ENCODE measurements at regions of chr5 and their contacts with region 1.

Region 1: DNA sequence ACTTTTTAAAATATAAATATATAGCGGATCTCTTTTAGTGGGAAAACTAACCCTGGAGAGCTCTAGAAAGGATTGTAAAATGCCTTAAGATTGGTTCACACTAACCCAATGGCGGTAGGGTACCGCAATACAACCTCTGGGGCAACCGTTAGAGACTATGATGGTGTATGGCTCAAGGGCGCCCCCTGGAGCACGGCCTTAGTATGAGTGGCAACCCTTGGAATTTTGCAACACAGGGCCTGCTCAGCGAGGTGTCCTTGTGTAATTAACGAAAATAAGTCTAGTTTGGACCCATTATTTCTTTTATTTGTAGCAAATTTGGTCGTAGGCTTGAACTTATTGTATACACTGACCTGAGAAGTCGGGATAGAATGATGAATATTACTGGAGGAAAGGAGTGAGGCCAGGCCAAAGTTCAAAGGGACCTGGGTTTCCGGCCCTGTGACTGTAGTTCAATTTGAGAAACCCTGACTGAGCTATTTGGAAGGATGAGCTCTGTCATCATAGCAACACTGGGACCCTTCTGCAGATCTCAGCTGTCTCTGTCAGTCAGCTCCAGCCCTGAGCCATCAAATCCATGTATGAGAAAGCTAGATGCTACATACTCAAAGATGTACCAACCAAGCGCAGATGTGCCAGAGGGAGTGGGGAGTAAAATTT is 54.8 kb downstream of the CAMK4 start:
- DNase-seq: no peak
- H3K4me3 ChIP-seq: no peak overlapping the region
- H3K27ac ChIP-seq: no peak overlapping the region
- H3K4me1 ChIP-seq: no peaks in the 10 kb centered on the region
- H3K27me3 ChIP-seq: no peaks in the 10 kb centered on the region
- CTCF ChIP-seq: peak in 2 of 3 experiments; percentile 50 to 58

Region 2: DNA sequence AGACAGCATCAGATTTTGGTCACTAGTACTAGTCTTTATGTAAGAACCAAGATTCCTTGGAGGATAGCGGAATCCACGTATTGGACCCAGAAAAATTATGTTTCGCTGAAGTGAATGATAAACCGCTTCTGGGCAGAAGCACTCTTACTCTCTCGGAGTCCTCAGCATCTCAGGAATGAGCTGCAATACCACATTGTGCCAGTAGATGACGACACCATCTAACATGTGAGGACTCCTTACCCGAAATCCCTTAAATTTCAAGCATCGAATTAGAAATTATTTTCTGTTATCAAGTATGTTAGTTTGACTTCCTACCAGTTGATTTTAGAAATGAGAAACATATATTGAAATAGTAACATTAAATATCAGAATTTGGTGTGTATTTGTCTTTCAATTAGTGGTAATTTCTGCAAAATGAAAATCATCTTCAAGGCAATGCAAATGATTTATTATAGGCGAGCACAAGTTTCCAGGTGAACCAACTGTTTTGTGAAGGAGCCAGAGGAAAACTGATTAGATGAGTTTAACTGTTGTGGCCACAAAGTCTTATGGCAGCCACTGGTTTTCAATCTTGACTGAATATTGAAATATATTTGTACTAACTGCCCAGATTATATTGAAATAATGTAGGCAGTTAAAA is 120.8 kb before region 1 on chr5:
- intact Hi-C with region 1: loop called (anchors 1 kb)
- DNase-seq: peak in 1 of 2 donors; percentile 78
- H3K4me3 ChIP-seq: no peak overlapping the region
- H3K27ac ChIP-seq: no peak overlapping the region
- H3K4me1 ChIP-seq: no peaks in the 10 kb centered on the region
- H3K27me3 ChIP-seq: no peaks in the 10 kb centered on the region
- CTCF ChIP-seq: peak; percentile 75 to 99 (median 96)

Region 3: GRCh38 chr5:111211341-111211740 is 67.6 kb before region 1 on chr5:
- intact Hi-C with region 1: no loop called
- DNase-seq: no peak
- H3K4me3 ChIP-seq: no peak overlapping the region
- H3K27ac ChIP-seq: no peak overlapping the region
- H3K4me1 ChIP-seq: no peaks in the 10 kb centered on the region
- H3K27me3 ChIP-seq: no peaks in the 10 kb centered on the region
- CTCF ChIP-seq: no peak

Region 4: DNA sequence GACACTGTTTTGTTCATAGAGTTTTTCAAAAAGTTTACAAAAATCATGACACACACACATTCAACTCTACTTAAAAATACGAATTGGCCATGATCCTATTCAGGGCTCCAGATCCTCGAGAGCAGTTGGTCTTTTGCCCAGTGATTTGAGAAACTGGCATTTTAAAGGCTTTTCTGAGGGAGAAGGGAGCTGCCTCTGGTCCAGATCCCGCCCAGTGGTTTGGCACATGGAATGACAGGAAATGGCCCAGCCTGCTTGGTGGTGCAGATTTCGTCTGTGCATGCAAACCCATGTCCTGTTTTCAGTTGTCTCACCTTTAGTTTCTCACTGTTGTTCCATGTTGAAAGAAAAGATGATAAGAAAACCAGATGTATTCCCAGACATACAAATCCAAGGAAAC is 51.2 kb before region 1 on chr5:
- intact Hi-C with region 1: no loop called
- DNase-seq: no peak
- H3K4me3 ChIP-seq: no peak overlapping the region
- H3K27ac ChIP-seq: no peak overlapping the region
- H3K4me1 ChIP-seq: peaks cover 3 to 11% of the 10 kb centered on the region in 2 donors
- H3K27me3 ChIP-seq: no peaks in the 10 kb centered on the region
- CTCF ChIP-seq: no peak